ENCODE measurements at regions of chr1 and their contacts with region 1.

Region 1: GRCh38 chr1:23772049-23772853 is 6.0 kb upstream of the PITHD1 start:
- DNase-seq: no peak
- H3K4me3 ChIP-seq: no peak overlapping the region
- CTCF ChIP-seq: peak; percentile 98

Region 2: DNA sequence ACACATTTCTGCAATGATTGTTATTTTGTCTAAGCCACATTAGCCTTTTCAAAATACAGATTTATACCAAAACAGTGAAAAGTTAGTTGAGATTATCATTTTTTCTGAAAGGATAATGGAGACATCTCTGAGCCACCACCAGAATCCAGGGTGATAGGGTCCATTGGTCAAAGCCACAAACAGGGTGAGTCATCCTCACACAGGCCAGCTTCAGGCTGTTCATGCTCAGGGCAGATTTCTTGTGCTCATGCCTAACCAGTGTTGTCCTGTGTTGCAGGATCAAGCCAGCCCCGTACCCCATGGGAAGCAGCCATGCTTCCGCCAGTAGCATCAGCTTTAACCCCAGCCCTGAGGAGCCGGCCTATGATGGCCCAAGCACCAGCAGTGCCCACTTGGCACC is 15.6 kb before region 1 on chr1:
- CTCF ChIA-PET with region 1: interaction called, 26 read pairs
- POLR2A ChIA-PET with region 1: interaction called, 3 read pairs
- DNase-seq: no peak
- H3K4me3 ChIP-seq: no peak overlapping the region
- CTCF ChIP-seq: no peak

Region 3: GRCh38 chr1:23854568-23854967 is 82.3 kb after region 1 on chr1:
- CTCF ChIA-PET with region 1: interaction called, 14 read pairs
- POLR2A ChIA-PET with region 1: no interaction called
- DNase-seq: no peak
- H3K4me3 ChIP-seq: no peak overlapping the region
- CTCF ChIP-seq: peak; percentile 17

Region 4: DNA sequence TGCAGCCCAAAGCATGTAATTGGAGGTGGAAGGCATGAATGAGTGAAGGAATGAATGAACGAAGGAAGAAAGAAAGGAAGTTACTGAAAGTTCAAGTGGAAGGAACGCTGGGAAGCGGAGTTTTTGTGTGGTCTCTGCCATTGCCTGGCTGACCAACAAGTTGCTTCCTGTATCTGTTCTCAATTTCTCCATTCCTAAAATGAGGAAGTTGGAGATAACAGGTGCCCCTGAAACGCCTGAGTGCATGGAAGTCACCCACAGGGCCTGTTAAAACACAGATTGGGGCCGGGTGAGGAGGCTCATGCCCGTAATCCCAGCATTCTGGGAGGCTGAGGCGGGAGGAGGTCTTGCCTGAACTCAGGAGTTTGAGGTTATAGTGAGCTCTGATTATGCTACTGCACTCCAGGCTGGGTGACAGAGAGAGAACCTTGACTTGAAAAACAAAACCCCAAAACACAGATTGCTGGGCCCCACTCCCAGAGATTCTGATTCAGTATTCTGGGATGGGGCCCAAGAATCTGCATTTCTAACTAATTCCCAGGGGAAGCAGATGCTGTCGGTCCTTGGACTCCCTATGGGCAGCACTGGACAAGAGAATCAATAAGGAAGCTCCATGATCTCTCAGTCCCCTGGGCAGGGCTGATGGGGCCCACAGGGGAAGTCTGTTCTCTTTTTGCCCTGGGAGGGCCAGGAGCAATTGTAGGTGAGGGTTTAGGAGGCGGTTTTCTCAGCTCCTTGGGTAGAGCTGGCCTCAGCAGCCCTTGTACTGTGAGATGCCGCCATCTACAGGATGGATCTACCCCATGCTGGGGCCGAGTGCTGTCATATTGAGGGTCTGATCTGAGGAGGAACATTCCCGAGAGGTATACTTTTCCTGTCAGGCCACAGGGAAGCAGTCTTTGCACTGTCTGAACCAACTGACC is 144.2 kb after region 1 on chr1:
- CTCF ChIA-PET with region 1: interaction called, 53 read pairs
- POLR2A ChIA-PET with region 1: no interaction called
- DNase-seq: no peak
- H3K4me3 ChIP-seq: no peak overlapping the region
- CTCF ChIP-seq: peak; percentile 66

Measured in AG04449 (cell line).